Aorta (tissue), 5 donors: ENCODE measurements at regions of chr14 and their contacts with region 1.

Region 1: GRCh38 chr14:75307700-75308379 is 29.2 kb downstream of the FOS start:
- DNase-seq: peak; percentile 90 to 95
- ATAC-seq: peak; percentile 84
- H3K4me3 ChIP-seq: no peak overlapping the region
- H3K27ac ChIP-seq: no peak overlapping the region
- H3K4me1 ChIP-seq: peaks cover 0 to 3% of the 10 kb centered on the region in 2 donors
- H3K27me3 ChIP-seq: no peaks in the 10 kb centered on the region

Region 2: DNA sequence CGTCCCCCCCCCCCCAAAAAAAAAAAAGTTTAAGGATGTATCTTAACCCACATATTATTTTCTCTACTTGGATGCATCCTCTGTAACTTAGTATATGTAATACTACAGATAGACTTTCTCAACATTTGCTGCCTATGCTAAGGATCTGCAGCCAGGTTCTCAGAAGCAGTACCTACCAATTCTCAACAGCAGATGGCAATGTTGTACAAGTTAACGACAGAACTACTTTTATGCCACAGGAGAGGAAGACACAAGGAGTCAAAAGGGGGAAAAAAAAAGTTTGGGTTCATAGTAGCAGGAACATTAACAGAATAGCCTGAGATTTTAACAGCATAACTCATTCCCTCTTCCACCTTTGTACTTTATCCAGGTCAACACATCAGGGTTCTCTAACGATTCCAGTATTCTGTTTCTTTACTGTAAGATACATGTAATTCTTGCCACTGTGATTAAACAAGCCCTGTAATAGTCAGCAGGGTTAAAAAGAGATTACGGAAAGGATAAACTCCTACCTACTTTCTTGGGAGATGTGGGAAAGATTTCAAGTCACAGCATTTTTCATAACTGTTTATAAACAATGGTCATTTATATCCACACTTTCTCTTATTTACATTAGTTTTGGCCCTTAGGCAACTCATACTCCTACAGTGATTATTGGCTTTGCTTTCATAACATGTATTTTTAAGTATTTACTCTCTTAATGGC is 175.3 kb before region 1 on chr14:
- intact Hi-C with region 1: loop called in 1 of 2 experiments (anchors 2 kb)
- DNase-seq: no peak
- ATAC-seq: peak; percentile 90
- H3K4me3 ChIP-seq: no peak overlapping the region
- H3K27ac ChIP-seq: no peak overlapping the region
- H3K4me1 ChIP-seq: no peaks in the 10 kb centered on the region
- H3K27me3 ChIP-seq: no peaks in the 10 kb centered on the region

Region 3: DNA sequence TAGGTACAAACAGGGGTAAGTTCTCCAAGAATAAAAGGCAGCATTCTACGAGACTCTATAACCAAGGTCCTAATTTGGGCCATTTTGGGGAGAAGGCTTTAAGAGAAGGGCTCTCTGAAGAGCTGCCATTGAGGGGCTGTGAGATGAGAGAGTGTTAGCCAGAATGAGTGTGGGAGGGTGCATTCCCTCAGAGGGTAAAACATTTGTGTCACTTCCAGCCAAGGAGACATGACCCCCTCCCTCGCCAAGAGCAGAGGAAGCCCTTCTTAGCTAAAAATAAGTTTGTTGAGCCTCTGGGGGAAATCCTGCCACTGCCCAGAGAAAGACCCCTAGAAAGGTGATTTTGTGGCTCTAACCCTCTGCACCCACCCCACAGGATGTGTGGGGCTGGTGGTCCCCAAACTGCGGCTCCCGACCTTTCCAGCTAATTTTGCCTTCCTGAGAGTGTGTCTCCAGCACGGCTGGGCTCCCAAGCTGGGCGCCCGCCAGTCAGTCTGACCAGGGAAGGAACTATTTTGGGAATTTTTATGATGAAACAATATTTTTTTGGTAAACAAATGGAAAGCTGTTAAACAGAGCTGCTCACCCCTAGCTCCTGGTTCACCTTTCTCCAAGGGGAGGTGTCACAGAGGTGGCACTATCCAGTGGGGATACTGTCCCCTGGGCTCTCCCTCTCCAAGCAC is 54.1 kb after region 1 on chr14:
- intact Hi-C with region 1: loop called in 1 of 2 experiments (anchors 5 kb)
- DNase-seq: peak; percentile 67 to 84
- ATAC-seq: peak; percentile 71
- H3K4me3 ChIP-seq: no peak overlapping the region
- H3K27ac ChIP-seq: peak overlapping the region in 1 of 2 donors; percentile 41
- H3K4me1 ChIP-seq: no peaks in the 10 kb centered on the region
- H3K27me3 ChIP-seq: no peaks in the 10 kb centered on the region

Region 4: GRCh38 chr14:75427482-75428229 is 119.8 kb after region 1 on chr14 and contains the start of gene JDP2:
- intact Hi-C with region 1: loop called (anchors 5 to 10 kb)
- DNase-seq: peak; percentile 96 to 98
- ATAC-seq: peak; percentile 91
- H3K4me3 ChIP-seq: peak within 1 kb of the TSS; percentile 85 to 92
- H3K27ac ChIP-seq: peak within 1 kb of the TSS in 1 of 2 donors; percentile 41
- H3K4me1 ChIP-seq: peaks cover 0 to 12% of the 10 kb centered on the region in 2 donors
- H3K27me3 ChIP-seq: no peaks in the 10 kb centered on the region
- total RNA-seq, gene JDP2: 48.3 to 50.2 TPM

Region 5: GRCh38 chr14:75487155-75487671 is 179.4 kb after region 1 on chr14:
- intact Hi-C with region 1: loop called (anchors 1 to 2 kb)
- DNase-seq: no peak
- ATAC-seq: no peak
- H3K4me3 ChIP-seq: no peak overlapping the region
- H3K27ac ChIP-seq: no peak overlapping the region
- H3K4me1 ChIP-seq: no peaks in the 10 kb centered on the region
- H3K27me3 ChIP-seq: no peaks in the 10 kb centered on the region

Region 6: DNA sequence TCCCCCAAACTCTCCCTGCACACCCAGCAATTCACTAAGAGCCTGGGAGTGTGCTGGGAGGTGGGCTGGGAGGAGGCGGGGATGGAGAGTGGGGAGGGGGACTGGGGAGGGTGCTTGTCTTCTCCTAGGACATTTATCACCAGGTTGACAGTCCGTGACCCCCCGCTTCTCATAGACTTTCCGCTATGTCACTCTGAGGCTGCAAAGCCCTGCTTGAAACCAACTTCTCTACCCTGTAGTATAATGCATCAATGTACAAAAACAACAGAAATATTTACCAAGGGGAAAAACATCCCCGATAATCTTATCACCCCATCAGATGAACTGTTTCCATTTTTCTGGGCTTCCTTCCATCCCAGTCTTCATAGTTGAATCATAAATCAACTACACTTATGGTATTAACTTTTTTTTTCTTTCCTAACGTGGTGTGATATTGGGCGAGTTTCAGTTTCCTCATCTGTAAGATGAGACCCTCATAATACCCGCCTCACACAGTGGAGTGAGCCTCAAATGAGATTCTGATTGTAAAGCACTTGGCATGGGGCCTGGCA is 185.8 kb after region 1 on chr14:
- intact Hi-C with region 1: loop called (anchors 1 to 2 kb)
- DNase-seq: no peak
- ATAC-seq: no peak
- H3K4me3 ChIP-seq: no peak overlapping the region
- H3K27ac ChIP-seq: no peak overlapping the region
- H3K4me1 ChIP-seq: no peaks in the 10 kb centered on the region
- H3K27me3 ChIP-seq: no peaks in the 10 kb centered on the region

Region 7: DNA sequence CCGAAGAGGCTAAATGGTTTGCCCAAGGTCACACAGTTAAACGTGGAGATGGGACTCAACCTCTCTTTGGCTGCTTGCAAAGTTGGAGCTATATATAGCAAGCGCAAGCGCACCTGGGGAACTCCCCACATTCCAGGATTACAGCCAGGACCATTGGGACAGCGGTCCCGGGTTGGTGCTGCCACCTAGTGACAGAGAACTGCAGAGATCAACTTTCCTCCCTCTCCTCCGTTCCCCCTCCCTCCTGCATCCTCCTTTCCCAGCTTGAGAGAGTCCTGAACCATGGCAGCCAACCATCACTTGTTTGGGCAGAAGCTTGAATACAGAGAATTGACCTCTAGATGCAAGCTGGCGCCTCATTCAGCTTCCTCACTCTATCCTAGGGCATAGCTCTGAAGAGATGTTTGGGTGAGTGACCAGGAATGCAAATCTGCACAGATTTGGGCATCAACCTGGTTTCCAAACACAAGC is 253.2 kb after region 1 on chr14:
- intact Hi-C with region 1: loop called in 1 of 2 experiments (anchors 2 kb)
- DNase-seq: peak; percentile 77 to 85
- ATAC-seq: peak; percentile 70
- H3K4me3 ChIP-seq: no peak overlapping the region
- H3K27ac ChIP-seq: no peak overlapping the region
- H3K4me1 ChIP-seq: no peaks in the 10 kb centered on the region
- H3K27me3 ChIP-seq: no peaks in the 10 kb centered on the region